Mammary epithelial cell (primary cell): ENCODE measurements at regions of chr13 and their contacts with region 1.

Region 1: DNA sequence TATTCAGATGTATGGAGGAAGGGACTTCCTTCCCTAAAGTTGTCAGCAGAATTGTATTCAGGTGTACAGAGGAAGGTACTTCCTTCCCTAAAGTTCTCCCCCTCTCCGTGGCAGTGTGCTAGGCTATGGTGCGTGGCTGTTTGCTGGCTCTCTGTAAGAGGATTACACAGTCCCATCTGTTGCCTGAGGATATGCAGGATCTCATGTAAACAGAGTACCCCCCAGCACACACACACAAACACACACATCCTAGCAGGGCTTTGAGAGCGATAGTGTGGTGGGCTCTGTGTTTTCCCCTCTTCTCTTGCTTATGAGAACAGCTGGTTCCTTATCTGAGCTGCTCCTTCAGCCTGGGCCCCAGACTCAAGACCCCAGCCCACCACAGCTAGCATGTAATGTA is 10.3 kb downstream of the NEK5 start:
- DNase-seq: no peak
- H3K4me3 ChIP-seq: no peak overlapping the region
- H3K27ac ChIP-seq: no peak overlapping the region
- H3K4me1 ChIP-seq: no peaks in the 10 kb centered on the region
- H3K27me3 ChIP-seq: peaks cover 2% of the 10 kb centered on the region
- CTCF ChIP-seq: no peak

Region 2: DNA sequence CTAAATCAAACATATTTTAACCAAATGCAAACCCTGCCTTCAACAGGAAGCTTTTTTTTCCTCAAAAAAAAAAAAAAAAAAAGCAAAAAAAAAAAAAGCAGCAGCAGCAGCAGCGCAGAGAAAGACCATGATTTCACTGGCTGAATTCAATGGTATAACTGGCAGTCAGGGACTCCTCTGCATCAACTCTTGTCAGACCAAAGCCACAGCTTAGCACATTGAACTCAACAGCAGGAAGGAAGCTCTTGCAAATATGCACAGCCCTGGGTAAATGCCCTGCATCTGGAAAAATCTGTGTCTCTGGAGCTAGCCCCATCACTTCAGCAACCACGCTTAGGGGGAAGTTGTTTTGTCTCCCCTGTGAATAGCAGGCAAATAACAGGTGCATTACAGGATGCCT is 297.0 kb before region 1 on chr13:
- CTCF ChIA-PET with region 1: no interaction called
- dilution Hi-C with region 1: no loop called
- in situ Hi-C with region 1: loop called in 1 of 2 experiments (anchors 5 kb)
- intact Hi-C with region 1: no loop called
- DNase-seq: no peak
- H3K4me3 ChIP-seq: no peak overlapping the region
- H3K27ac ChIP-seq: no peak overlapping the region
- H3K4me1 ChIP-seq: peaks cover 4% of the 10 kb centered on the region
- H3K27me3 ChIP-seq: no peaks in the 10 kb centered on the region
- CTCF ChIP-seq: no peak

Region 3: DNA sequence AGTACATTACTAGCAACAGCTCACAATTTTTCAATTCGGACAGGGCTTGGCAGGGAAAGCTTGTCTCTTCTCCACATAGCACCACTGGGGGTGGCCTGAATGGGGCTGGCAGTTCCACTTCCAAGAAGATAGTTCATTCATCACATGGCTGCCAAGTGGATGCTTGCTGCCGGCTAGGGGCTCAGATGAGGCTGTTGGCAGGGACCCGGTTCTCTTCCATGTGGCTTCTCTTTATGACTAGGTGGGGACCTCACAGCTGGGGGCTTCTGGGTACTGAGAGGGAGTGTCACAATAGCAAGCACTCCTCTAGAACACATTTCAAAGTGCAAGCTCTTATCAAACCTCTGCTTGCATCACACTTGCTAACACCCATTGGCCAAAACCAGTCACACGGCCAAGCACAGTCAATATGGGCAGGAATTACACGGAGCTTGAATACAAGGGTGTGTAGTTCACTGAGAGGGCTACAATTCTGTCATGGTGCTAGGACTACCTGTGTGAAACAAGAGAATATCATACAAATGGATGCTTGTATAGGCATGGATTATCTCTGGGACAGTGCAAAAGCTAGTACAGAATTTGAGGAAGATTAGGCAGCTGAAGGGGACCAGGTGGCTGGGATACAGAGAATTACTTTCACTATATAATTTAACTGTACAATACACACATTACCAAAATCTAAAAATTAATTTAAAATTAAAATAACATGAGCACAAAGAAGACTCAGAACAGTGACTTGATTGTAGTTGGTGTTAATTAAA is 139.6 kb before region 1 on chr13:
- CTCF ChIA-PET with region 1: no interaction called
- dilution Hi-C with region 1: no loop called
- in situ Hi-C with region 1: no loop called
- intact Hi-C with region 1: no loop called
- DNase-seq: no peak
- H3K4me3 ChIP-seq: no peak overlapping the region
- H3K27ac ChIP-seq: no peak overlapping the region
- H3K4me1 ChIP-seq: no peaks in the 10 kb centered on the region
- H3K27me3 ChIP-seq: no peaks in the 10 kb centered on the region
- CTCF ChIP-seq: no peak

Region 4: GRCh38 chr13:52070929-52071523 is 47.6 kb before region 1 on chr13:
- CTCF ChIA-PET with region 1: no interaction called
- dilution Hi-C with region 1: no loop called
- in situ Hi-C with region 1: no loop called
- intact Hi-C with region 1: no loop called
- DNase-seq: peak; percentile 46
- H3K4me3 ChIP-seq: no peak overlapping the region
- H3K27ac ChIP-seq: no peak overlapping the region
- H3K4me1 ChIP-seq: peaks cover 5% of the 10 kb centered on the region
- H3K27me3 ChIP-seq: no peaks in the 10 kb centered on the region
- CTCF ChIP-seq: peak; percentile 29 to 50